Esophagus muscularis mucosa (tissue), 4 donors: ENCODE measurements at regions of chr5 and their contacts with region 1.

Region 1: DNA sequence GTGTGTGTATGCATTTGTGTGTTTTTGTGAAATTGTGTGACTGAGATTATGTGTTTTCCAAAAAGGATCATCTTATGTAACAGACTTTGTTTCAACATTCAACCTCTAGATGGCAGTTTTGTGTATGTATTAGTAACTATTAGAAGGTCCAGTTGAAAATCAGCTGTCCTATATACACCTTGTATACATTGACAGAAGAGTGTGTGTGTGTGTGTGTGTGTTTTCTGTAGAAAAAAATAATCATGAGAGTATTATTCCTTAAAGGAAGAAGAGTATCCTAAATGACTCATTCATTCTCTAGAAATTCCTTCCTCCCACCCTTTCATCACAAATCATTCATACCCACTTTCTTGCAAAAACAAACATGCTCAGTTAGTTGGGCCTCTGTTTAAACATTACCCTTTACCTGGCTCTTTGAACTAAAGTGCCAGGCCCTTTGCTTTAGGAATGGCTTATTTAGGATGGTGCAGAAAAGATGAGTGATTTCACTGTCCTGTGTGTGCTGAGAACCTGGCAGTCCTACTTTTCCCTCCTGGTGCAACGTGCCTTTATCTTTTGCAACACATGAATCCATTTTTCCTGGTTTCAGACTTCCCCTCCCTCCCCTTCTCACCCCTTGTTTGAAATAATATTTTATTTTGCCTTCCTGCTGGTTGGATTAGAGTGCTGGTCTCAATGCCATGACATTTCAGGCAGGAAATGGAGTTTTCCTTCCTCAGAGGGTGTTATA is 152.2 kb downstream of the ARHGAP26 start:
- DNase-seq: no peak
- H3K4me3 ChIP-seq: no peak overlapping the region
- H3K27ac ChIP-seq: no peak overlapping the region
- H3K4me1 ChIP-seq: peaks cover 20 to 37% (median 28%) of the 10 kb centered on the region in 4 donors
- H3K27me3 ChIP-seq: no peaks in the 10 kb centered on the region
- CTCF ChIP-seq: peak; percentile 54 to 55 (median 55)
- EP300 ChIP-seq: no peak
- POLR2A ChIP-seq: no peak

Region 2: DNA sequence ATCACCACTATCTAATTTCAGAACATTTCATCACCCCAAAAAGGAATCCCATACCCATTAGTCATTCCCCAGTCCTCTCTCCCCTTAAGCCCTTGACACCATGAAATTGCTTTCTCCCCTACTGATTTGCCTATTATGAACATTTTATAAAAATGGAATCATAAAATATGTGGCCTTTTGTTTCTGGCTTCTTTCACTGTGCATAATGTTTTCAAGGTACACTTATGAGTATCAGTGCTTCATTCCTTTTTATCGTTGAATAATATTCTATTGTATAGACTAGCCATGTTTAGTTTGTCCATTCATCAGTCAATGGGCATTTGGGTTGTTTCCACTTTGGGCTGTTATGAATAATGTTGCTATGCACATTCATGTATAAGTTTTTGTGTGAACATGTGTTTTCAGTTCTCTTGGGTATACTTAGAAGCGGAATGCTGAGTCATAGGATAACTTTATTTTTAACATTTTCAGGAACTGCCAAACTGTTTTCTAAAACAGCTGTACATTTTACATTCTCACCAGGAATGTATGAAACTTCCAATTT is 196.1 kb before region 1 on chr5:
- intact Hi-C with region 1: no loop called
- DNase-seq: no peak
- H3K4me3 ChIP-seq: no peak overlapping the region
- H3K27ac ChIP-seq: no peak overlapping the region
- H3K4me1 ChIP-seq: peaks cover 0 to 13% (median 12%) of the 10 kb centered on the region in 4 donors
- H3K27me3 ChIP-seq: peaks cover 0 to 7% (median 0%) of the 10 kb centered on the region in 4 donors
- CTCF ChIP-seq: no peak
- EP300 ChIP-seq: no peak
- POLR2A ChIP-seq: no peak

Region 3: DNA sequence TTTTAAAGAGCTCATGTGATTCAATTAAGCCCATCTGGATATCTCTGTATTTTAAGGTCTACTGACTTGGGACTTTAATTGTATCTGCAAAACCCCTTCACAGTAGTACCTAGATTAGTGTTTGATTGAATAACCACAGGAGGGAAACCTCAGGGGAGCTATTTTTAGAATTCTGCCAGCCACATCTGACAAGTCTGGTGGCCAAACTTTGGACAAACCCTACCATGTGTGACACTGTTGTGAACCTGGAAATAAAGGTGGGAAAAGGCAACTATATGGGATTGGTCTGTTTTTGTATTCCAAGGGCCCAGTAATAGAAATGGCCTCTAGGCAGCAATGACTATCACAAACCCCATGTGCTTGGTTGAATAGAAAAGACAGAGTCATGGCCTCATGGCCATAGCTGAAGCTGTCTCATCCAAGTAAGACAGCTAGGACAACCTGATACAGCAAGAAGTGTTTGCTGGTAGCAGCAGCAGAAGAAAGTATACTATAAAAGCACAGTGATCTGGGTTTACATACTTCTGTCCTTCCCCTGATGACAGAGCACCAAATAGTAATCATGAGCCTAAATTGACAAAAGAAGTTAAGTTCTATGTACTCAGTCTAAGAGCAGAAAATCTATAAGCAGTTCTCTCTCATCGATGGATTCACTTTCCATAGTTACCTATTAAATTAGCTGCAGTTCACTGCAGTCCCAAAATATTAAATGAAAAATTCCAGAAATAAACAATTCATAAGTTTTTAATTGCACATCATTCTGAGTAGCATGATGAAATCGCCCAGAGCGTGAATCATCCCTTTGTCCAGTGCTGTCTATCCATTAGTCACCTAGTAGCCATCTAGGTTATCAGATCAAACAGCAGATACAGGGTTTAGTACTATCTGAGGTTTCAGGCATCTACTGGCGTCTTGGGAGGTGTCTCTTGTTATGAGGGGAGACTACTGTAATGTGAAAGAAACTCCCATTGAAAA is 37.6 kb after region 1 on chr5:
- intact Hi-C with region 1: loop called (anchors 2 kb)
- DNase-seq: no peak
- H3K4me3 ChIP-seq: no peak overlapping the region
- H3K27ac ChIP-seq: no peak overlapping the region
- H3K4me1 ChIP-seq: peaks cover 40 to 51% (median 47%) of the 10 kb centered on the region in 4 donors
- H3K27me3 ChIP-seq: no peaks in the 10 kb centered on the region
- CTCF ChIP-seq: no peak
- EP300 ChIP-seq: no peak
- POLR2A ChIP-seq: no peak

Region 4: DNA sequence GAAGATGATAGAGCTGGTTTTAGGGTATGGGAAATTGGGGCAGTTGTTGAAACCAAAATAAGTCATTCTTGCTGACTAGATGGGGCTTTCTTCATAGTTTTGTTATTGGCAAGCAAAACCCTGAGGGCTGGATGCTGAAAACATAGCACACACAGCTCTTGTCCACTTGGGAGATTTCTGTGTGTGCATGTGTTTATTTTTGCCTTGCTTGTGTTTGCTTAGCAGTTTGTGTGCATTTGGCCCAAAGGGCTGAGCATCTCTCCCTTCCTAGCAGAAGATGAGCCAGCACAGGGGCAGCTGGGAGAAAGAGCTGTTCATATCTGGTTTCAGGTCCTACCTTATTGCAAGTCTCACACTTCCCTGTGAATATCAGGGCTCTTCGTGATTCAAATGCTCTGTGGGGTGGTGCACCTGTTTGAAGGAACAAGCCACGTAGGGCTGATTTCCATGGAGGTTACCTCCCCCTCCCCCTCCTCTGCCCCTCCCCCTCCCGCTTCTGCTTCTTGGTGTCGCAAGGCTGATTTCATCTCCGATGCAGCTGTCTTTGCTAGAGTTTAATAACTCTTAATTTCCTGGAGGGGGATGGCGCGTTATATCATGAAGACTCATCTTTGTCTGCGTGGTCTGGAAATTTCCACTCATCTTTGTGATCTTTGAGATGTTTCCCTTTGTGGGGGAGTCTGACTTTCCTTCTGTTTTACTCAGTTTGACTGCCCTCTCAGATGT is 144.3 kb after region 1 on chr5:
- intact Hi-C with region 1: no loop called
- DNase-seq: no peak
- H3K4me3 ChIP-seq: no peak overlapping the region
- H3K27ac ChIP-seq: peak overlapping the region in 1 of 4 donors; percentile 23
- H3K4me1 ChIP-seq: peaks cover 48 to 51% (median 49%) of the 10 kb centered on the region in 4 donors
- H3K27me3 ChIP-seq: no peaks in the 10 kb centered on the region
- CTCF ChIP-seq: no peak
- EP300 ChIP-seq: no peak
- POLR2A ChIP-seq: no peak

Region 5: GRCh38 chr5:143824851-143825720 is 902.7 kb after region 1 on chr5:
- intact Hi-C with region 1: loop called (anchors 2 kb)
- DNase-seq: peak; percentile 94
- H3K4me3 ChIP-seq: no peak overlapping the region
- H3K27ac ChIP-seq: no peak overlapping the region
- H3K4me1 ChIP-seq: peaks cover 5 to 12% (median 7%) of the 10 kb centered on the region in 4 donors
- H3K27me3 ChIP-seq: no peaks in the 10 kb centered on the region
- CTCF ChIP-seq: peak in 2 of 3 experiments; percentile 90 to 96
- EP300 ChIP-seq: no peak
- POLR2A ChIP-seq: no peak